Activated CD4-positive, alpha-beta memory T cell treated with anti-CD3 and anti-CD28 coated beads for 36 hours (primary cell): ENCODE measurements at regions of chr5 and their contacts with region 1.

Region 1: GRCh38 chr5:126656396-126657007 is 55.8 kb downstream of the PHAX start:
- DNase-seq: peak; percentile 30
- H3K4me3 Mint-ChIP-seq: no peak overlapping the region
- H3K27ac Mint-ChIP-seq: no peak overlapping the region
- H3K4me1 Mint-ChIP-seq: peaks cover 6% of the 10 kb centered on the region
- H3K27me3 Mint-ChIP-seq: no peaks in the 10 kb centered on the region

Region 2: DNA sequence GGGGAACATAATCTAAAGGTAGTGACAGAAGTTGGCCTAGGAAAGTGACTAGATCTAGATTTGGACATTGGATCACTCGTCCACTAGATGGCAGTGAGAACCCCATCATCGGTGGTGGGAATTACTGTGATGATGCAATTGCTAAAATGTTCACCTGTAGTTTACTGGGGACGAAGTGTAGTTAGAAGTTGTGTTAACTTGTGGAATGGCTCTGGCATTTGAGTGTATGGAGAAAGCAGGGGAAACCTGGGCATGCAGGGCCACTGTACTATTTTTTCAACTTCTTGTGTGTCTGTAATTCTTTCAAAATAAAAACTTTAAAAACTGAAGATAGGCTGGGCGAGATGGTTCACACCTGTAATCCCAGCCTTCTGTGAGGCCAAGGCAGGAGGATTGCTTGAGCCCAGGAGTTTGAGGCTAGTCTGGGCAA is 19.7 kb after region 1 on chr5:
- CTCF ChIA-PET with region 1: interaction called, 10 read pairs
- POLR2A ChIA-PET with region 1: no interaction called
- intact Hi-C with region 1: no loop called
- DNase-seq: peak; percentile 78
- H3K4me3 Mint-ChIP-seq: no peak overlapping the region
- H3K27ac Mint-ChIP-seq: peak overlapping the region; percentile 20
- H3K4me1 Mint-ChIP-seq: peaks cover 3% of the 10 kb centered on the region
- H3K27me3 Mint-ChIP-seq: no peaks in the 10 kb centered on the region

Region 3: GRCh38 chr5:127229185-127229889 is 572.8 kb after region 1 on chr5:
- CTCF ChIA-PET with region 1: no interaction called
- POLR2A ChIA-PET with region 1: no interaction called
- intact Hi-C with region 1: loop called (anchors 5 kb)
- DNase-seq: peak; percentile 61
- H3K4me3 Mint-ChIP-seq: peak overlapping the region; percentile 60
- H3K27ac Mint-ChIP-seq: no peak overlapping the region
- H3K4me1 Mint-ChIP-seq: peaks cover 21% of the 10 kb centered on the region
- H3K27me3 Mint-ChIP-seq: no peaks in the 10 kb centered on the region

Region 4: DNA sequence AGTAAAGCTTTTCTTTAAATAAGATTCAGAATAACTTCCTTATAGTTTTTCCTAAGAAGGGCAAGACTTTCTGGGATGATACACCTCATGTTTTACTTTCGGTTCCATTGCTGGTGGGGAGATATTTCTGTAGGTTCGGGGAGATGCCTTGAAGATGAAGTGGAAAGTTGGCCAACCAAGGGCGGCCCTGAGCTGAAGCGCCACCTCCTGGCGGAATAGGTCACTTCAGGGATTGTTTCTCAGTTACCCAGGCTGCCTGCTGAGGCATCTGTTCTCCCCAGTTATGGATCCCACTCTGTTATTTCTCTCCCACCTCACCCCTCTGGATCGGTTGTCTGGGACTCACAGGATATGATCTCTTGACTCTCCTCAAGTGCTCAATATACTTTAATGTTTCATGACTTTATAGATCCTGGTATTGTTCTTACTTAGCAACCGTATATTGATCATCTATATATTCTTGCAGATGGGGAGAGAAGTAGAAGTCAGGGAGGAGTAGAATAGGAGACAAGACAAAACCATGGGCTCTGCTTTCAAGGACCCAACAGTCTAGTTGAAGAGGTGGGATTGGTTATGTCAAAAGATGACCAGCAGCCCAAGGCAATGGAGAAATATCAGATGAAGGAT is 657.5 kb after region 1 on chr5:
- CTCF ChIA-PET with region 1: interaction called, 9 read pairs
- POLR2A ChIA-PET with region 1: no interaction called
- intact Hi-C with region 1: loop called (anchors 1 kb)
- DNase-seq: peak; percentile 76
- H3K4me3 Mint-ChIP-seq: no peak overlapping the region
- H3K27ac Mint-ChIP-seq: no peak overlapping the region
- H3K4me1 Mint-ChIP-seq: peaks cover 2% of the 10 kb centered on the region
- H3K27me3 Mint-ChIP-seq: peaks cover 5% of the 10 kb centered on the region

Region 5: DNA sequence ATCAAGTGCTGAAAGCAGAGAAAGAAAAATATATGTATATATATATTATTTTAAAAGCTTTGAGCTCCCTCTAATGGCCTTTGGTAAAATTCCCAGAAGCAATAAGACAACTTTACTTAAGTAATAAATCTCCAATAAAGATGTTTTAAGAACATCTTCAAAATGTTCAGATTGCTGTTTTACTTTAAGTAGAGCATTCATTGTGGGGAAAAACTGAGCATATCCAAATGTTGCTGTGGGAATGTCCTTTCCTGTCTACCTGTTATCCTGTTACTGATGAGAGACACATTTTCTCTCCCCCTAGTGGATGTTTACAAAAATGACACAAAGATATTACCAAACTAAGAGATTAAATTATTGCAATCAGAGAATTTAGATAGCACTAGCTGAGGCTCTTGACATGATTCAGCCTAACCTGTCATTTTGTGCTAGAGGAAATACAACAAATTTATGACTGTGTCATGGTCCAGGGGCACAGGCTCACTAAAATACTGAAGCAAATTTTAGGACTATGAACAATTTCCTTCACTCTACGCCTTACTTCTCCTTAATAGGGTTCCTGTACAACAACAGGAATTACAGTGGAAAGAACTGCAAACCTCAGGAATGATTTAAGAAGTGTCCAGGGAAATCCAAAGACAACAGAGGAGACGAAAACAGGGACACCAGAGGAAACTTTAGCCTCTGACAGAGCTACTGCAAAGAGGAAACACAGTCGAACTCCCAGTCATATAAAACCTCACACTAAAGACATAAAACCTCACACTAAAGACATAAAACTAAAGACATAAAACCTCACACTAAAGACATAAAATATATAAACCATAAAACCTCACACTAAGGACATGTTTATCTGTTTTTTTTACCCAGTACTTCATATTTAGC is 836.6 kb after region 1 on chr5:
- CTCF ChIA-PET with region 1: interaction called, 7 read pairs
- POLR2A ChIA-PET with region 1: no interaction called
- intact Hi-C with region 1: loop called (anchors 1 kb)
- DNase-seq: no peak
- H3K4me3 Mint-ChIP-seq: no peak overlapping the region
- H3K27ac Mint-ChIP-seq: no peak overlapping the region
- H3K4me1 Mint-ChIP-seq: no peaks in the 10 kb centered on the region
- H3K27me3 Mint-ChIP-seq: peaks cover 5% of the 10 kb centered on the region

Region 6: DNA sequence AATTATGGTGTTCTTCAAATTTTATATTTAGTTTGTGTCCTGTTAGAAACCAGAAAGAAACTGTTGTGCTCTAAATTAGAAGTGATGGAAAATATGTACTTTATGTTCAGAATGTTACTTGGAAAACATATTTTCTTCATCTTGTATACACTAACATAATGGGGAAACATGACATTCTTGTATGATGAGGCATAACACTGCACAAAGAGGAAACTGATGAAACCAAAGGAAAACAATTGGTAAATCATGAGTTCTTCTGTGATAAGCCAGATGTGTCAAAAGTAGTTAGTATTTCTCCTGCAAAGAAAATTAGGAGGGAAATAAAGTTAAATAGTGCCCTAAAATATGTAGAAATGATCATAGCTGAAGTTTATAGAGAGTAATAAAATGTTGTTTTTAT is 1992.7 kb after region 1 on chr5:
- CTCF ChIA-PET with region 1: no interaction called
- POLR2A ChIA-PET with region 1: no interaction called
- intact Hi-C with region 1: no loop called
- DNase-seq: no peak
- H3K4me3 Mint-ChIP-seq: no peak overlapping the region
- H3K27ac Mint-ChIP-seq: no peak overlapping the region
- H3K4me1 Mint-ChIP-seq: no peaks in the 10 kb centered on the region
- H3K27me3 Mint-ChIP-seq: peaks cover 2% of the 10 kb centered on the region